HCT116 (cell line): ENCODE measurements at regions of chr18 and their contacts with region 1.

Region 1: GRCh38 chr18:12947355-12948041 is at the start of gene SEH1L:
- DNase-seq: peak; percentile 93
- ATAC-seq: peak; percentile 89
- H3K4me3 ChIP-seq: peak within 1 kb of the TSS; percentile 71 to 86
- H3K27ac ChIP-seq: peak within 1 kb of the TSS; percentile 92
- H3K4me1 ChIP-seq: peaks cover 11 to 23% of the 10 kb centered on the region in 2 experiments; a peak in 3 of 4 replicates
- H3K27me3 ChIP-seq: no peaks in the 10 kb centered on the region
- CTCF ChIP-seq: no peak
- POLR2A ChIP-seq: peak; percentile 78
- RAD21 ChIP-seq: no peak; the same call in 1 of the 2 replicates
- total RNA-seq, gene SEH1L: 83.7 TPM

Region 2: GRCh38 chr18:12376718-12377555 is 570.6 kb before region 1 on chr18 and contains the start of gene AFG3L2:
- CTCF ChIA-PET with region 1: no interaction called
- POLR2A ChIA-PET with region 1: interaction called, 3 read pairs
- RAD21 ChIA-PET with region 1: no interaction called
- intact Hi-C with region 1: loop called (anchors 2 kb)
- DNase-seq: peak; percentile 95
- ATAC-seq: peak; percentile 90
- H3K4me3 ChIP-seq: peak within 1 kb of the TSS; percentile 90 to 95
- H3K27ac ChIP-seq: peak within 1 kb of the TSS; percentile 99
- H3K4me1 ChIP-seq: peaks cover 8 to 17% of the 10 kb centered on the region in 2 experiments
- H3K27me3 ChIP-seq: no peaks in the 10 kb centered on the region
- CTCF ChIP-seq: no peak
- POLR2A ChIP-seq: peak; percentile 84
- RAD21 ChIP-seq: no peak
- total RNA-seq, gene AFG3L2: 66.7 TPM

Region 3: GRCh38 chr18:12408247-12408869 is 539.1 kb before region 1 on chr18:
- CTCF ChIA-PET with region 1: no interaction called
- POLR2A ChIA-PET with region 1: no interaction called
- RAD21 ChIA-PET with region 1: no interaction called
- intact Hi-C with region 1: loop called (anchors 5 kb)
- DNase-seq: no peak
- ATAC-seq: no peak; the same call in none of the 2 replicates
- H3K4me3 ChIP-seq: peak overlapping the region; percentile 54 to 83
- H3K27ac ChIP-seq: peak overlapping the region; percentile 77
- H3K4me1 ChIP-seq: peaks cover 17 to 37% of the 10 kb centered on the region in 2 experiments
- H3K27me3 ChIP-seq: peaks cover 17% of the 10 kb centered on the region; the same call in 1 of the 2 replicates
- CTCF ChIP-seq: no peak
- POLR2A ChIP-seq: no peak
- RAD21 ChIP-seq: no peak

Region 4: DNA sequence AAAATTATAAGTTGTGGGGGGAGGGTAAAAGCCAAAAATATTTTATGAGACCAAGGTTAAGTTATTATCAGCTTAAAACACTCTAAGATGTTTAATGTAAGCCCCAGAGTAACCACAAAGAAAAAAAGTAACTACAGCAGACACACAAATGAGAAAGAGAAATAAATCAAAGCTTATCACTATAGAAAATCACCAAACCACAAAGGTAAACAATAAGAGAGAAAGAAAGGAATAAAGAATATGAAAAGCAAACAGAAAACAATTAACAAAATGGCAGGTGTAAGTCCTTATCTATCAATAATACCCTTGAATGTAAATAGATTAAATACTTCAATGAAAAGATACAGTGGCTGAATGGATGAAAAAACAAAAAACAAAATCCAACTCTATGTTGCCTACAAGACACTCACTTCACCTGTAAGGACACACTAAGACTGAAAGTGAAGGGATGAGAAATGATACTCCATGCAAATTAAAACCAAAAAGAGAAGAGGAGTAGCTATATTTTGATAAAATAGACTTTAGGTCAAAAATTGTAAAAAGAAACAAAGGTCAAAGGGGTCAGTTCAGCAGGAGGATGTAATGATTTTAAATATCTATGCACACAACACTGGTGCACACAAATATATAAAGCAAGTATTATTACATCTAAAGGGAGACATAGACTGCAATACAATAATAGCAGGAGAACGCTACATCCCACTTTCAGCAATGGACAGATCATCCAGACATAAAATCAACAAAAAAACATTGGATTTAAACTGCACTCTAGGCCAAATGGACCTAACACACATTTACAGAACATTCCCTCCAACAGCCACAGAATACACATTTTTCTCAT is 144.2 kb before region 1 on chr18:
- CTCF ChIA-PET with region 1: no interaction called
- POLR2A ChIA-PET with region 1: no interaction called
- RAD21 ChIA-PET with region 1: no interaction called
- intact Hi-C with region 1: no loop called
- DNase-seq: no peak
- ATAC-seq: no peak
- H3K4me3 ChIP-seq: no peak overlapping the region
- H3K27ac ChIP-seq: no peak overlapping the region
- H3K4me1 ChIP-seq: no peaks in the 10 kb centered on the region
- H3K27me3 ChIP-seq: no peaks in the 10 kb centered on the region
- CTCF ChIP-seq: no peak
- POLR2A ChIP-seq: no peak
- RAD21 ChIP-seq: no peak

Region 5: GRCh38 chr18:12883684-12884405 is 63.7 kb before region 1 on chr18 and contains the start of gene PTPN2:
- CTCF ChIA-PET with region 1: no interaction called
- POLR2A ChIA-PET with region 1: interaction called, 4 read pairs
- RAD21 ChIA-PET with region 1: no interaction called
- intact Hi-C with region 1: loop called (anchors 2 kb)
- DNase-seq: peak; percentile 82
- ATAC-seq: peak; percentile 92
- H3K4me3 ChIP-seq: peak within 1 kb of the TSS; percentile 81 to 87
- H3K27ac ChIP-seq: peak within 1 kb of the TSS; percentile 96
- H3K4me1 ChIP-seq: peaks cover 3 to 18% of the 10 kb centered on the region in 2 experiments
- H3K27me3 ChIP-seq: no peaks in the 10 kb centered on the region
- CTCF ChIP-seq: no peak
- POLR2A ChIP-seq: peak; percentile 98
- RAD21 ChIP-seq: no peak
- total RNA-seq, gene PTPN2: 50.3 TPM

Region 6: DNA sequence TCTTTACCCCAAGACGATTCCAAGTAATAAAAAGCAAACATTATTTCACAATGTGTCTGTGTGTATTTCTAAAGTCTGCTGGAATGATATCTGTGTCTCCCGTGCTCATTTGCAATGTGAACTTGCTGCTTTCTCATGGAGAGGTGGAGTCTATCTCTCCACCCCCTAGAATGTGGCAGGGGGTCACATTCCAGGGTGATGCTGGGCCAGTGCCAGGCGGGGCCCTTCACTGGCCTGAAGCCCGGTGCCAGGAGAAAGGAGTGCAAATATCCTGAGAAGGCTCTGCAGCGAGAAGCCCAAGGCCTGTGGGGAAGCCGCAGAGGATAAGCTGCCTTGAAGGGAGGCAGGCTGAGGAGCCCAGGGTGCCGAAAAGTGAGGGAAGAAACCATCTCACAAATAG is 244.3 kb after region 1 on chr18:
- CTCF ChIA-PET with region 1: no interaction called
- POLR2A ChIA-PET with region 1: no interaction called
- RAD21 ChIA-PET with region 1: no interaction called
- intact Hi-C with region 1: no loop called
- DNase-seq: no peak
- ATAC-seq: no peak
- H3K4me3 ChIP-seq: no peak overlapping the region
- H3K27ac ChIP-seq: no peak overlapping the region
- H3K4me1 ChIP-seq: no peaks in the 10 kb centered on the region
- H3K27me3 ChIP-seq: no peaks in the 10 kb centered on the region
- CTCF ChIP-seq: no peak
- POLR2A ChIP-seq: no peak
- RAD21 ChIP-seq: no peak